Breast epithelium (tissue), 4 donors: ENCODE measurements at regions of chr11 and their contacts with region 1.

Region 1: GRCh38 chr11:67066333-67066965 is 9.8 kb downstream of the RHOD start:
- DNase-seq: no peak
- H3K4me3 ChIP-seq: no peak overlapping the region
- H3K27ac ChIP-seq: no peak overlapping the region
- H3K4me1 ChIP-seq: no peaks in the 10 kb centered on the region
- H3K27me3 ChIP-seq: no peaks in the 10 kb centered on the region
- CTCF ChIP-seq: no peak
- POLR2A ChIP-seq: no peak

Region 2: DNA sequence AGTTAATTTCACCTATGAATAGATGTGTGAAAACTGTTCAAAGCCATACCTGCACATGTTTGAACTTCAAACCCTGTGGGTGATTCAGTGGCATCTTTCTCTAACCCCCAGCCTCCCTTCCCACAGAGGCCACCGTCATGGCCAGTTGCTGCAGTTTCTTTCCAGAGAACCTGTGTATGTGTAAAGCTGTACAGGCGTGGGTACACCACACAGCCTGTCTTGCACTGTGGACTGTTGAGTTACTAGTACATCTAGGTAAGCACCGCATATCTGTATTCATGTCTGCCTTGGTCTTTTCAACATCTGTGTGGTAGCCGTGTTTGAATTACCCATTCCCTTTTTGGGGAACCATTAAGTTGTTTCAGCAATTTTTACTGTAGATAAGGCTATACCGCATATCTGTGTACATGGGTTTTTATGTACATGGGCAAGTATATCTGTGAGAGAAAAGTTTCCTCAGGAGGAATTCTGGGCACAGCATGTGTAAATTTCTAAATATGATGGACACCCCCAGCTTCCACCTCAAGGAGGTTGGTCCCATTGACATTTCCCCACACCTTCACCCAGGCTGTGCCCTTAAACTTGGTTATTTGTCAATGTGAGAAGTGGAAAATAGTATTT is 1629.9 kb before region 1 on chr11:
- intact Hi-C with region 1: loop called (anchors 5 kb)
- DNase-seq: peak in 1 of 2 donors; percentile 17
- H3K4me3 ChIP-seq: no peak overlapping the region
- H3K27ac ChIP-seq: peak overlapping the region; percentile 43 to 66
- H3K4me1 ChIP-seq: peaks cover 0 to under 1% of the 10 kb centered on the region in 2 donors
- H3K27me3 ChIP-seq: no peaks in the 10 kb centered on the region
- CTCF ChIP-seq: no peak
- POLR2A ChIP-seq: no peak

Region 3: DNA sequence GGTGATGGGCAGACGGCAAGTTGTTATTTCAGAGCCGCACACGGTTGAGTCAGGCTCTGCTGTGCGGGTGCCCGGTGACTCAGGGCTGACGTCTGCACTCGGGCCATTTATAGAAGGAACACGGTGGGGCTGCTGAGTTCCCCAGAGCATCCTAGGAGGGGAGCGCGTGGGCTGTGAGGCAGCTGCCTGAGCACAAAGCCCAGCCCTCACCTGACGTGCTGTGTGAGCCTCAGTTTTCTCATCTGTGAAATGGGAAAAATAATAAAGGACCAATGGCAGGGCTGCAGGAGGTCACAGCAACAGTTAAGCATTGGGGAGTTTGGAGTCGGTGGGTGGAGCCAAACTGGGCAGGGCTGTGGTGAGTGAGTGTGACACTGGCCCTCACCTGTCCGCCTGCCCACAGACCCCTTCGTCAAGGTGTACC is 21.1 kb before region 1 on chr11:
- intact Hi-C with region 1: no loop called
- DNase-seq: no peak
- H3K4me3 ChIP-seq: no peak overlapping the region
- H3K27ac ChIP-seq: no peak overlapping the region
- H3K4me1 ChIP-seq: no peaks in the 10 kb centered on the region
- H3K27me3 ChIP-seq: no peaks in the 10 kb centered on the region
- CTCF ChIP-seq: no peak
- POLR2A ChIP-seq: no peak

Region 4: DNA sequence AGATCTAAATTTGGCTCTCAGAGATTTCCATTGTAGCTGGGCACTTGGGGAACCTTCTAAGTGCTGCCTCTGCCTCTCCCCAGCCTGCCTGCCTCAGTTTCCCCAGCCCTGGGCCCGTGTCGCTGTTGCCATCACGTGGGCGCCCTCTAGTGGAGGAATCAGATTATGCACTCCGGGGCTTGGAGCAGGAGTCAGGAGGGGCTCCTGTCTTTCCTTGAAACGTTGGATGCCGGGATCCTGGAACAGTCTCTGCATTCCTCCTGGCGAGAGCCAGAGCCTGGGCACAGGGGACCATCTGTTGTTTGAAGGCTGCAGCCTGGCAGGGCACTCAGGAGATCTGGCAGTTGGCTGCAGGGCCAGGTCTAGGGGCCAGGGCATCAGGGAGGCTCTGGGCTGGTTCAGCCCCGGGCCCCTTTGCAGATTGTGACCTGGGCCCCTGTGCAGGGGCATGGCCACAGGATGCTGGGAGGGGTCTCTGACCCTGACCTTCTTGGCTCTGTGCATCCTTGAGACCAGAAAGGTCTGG is 1317.6 kb after region 1 on chr11:
- intact Hi-C with region 1: no loop called
- DNase-seq: no peak
- H3K4me3 ChIP-seq: no peak overlapping the region
- H3K27ac ChIP-seq: peak overlapping the region in 1 of 2 donors; percentile 21
- H3K4me1 ChIP-seq: peaks cover 13 to 15% of the 10 kb centered on the region in 2 donors
- H3K27me3 ChIP-seq: no peaks in the 10 kb centered on the region
- CTCF ChIP-seq: peak; percentile 89 to 94 (median 90)
- POLR2A ChIP-seq: no peak